Panc1 (cell line): ENCODE measurements at regions of chr22 and their contacts with region 1.

Region 1: DNA sequence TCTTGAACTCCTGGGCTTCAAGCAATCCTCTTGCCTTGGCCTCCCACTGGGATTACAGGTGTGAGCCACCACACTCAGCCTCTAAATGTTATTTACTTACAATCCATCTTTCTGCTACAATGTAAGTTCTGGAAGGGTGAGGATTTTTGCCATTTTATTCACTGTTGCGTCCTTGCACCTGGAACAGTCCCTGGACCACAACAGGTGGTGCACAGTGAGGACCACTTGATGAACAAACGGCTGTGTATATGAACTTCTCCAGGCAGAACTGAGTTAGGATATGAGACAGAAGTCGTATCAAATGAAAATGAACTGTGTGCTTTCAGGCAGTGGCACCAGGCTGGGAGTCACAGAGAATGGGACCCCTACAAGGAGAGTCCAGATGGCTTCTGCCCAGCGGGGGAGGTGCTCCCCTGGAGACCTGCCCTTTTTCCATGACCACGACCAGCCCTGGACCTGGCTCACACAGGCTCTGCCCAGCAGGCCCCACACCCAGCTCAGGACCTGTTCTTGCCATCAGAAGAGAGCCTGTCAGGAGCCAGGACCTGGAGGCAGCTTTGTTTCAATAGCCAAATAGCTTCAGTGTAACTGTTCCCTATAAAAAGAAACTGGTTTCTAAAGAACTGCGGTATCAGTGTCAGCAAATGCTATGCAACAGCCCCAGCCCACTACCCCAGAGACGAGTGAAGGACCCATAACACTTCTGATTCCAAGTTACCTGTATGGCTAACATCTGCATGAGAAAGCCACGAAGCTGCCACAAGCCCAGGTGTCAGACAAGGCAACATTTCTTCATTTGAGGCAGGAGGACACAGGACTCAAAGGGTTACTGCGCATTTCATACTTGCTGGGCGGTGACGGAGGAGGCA is 104.9 kb downstream of the MICAL3 start:
- DNase-seq: no peak
- ATAC-seq: no peak
- H3K4me3 ChIP-seq: no peak overlapping the region
- H3K27ac ChIP-seq: no peak overlapping the region
- H3K4me1 ChIP-seq: peaks cover 17% of the 10 kb centered on the region
- H3K27me3 ChIP-seq: no peaks in the 10 kb centered on the region
- CTCF ChIP-seq: no peak

Region 2: DNA sequence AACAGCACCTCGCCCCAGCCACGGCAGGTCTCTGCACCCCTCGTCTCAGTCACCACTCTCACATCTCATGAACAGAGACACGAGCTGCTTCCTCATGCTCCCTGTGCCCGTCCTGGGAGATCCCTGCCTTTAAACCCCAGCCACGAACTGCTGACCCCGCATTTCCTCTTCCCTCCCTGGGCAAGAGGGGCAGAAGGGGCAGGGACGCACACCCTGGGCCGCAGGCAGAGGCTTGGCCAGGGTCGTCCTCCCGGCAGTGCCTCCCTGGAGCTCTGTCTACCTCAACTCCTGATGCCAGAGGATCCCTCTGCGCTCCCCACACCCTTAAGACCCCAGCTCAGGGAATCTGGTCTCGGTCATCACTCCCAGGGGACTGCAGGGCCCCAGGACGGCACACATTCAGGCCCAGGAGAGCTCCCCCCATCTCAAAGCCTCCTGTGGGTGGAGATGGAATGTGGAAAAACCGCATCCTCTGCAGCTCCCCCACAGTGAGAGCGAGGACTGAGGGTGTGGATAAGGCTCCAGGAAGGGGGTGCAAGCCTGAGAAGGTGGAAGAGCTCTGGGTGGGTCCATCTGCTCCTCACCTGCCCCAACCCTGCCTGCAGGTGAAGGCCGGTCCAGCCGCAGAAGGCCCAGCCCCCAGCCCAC is 146.4 kb before region 1 on chr22:
- CTCF ChIA-PET with region 1: no interaction called
- POLR2A ChIA-PET with region 1: interaction called, 12 read pairs
- in situ Hi-C with region 1: no loop called
- intact Hi-C with region 1: no loop called
- DNase-seq: no peak
- ATAC-seq: no peak
- H3K4me3 ChIP-seq: peak overlapping the region; percentile 60 to 66
- H3K27ac ChIP-seq: peak overlapping the region; percentile 56
- H3K4me1 ChIP-seq: peaks cover 31% of the 10 kb centered on the region
- H3K27me3 ChIP-seq: no peaks in the 10 kb centered on the region
- CTCF ChIP-seq: no peak

Region 3: GRCh38 chr22:17820879-17821439 is 98.6 kb before region 1 on chr22:
- CTCF ChIA-PET with region 1: no interaction called
- POLR2A ChIA-PET with region 1: no interaction called
- in situ Hi-C with region 1: no loop called
- intact Hi-C with region 1: no loop called
- DNase-seq: no peak
- ATAC-seq: 0 out of 2 replicates have a peak, but pooled peaks have one; percentile 53
- H3K4me3 ChIP-seq: no peak overlapping the region
- H3K27ac ChIP-seq: no peak overlapping the region
- H3K4me1 ChIP-seq: no peaks in the 10 kb centered on the region
- H3K27me3 ChIP-seq: no peaks in the 10 kb centered on the region
- CTCF ChIP-seq: no peak